Heart left ventricle (tissue), 16 donors: ENCODE measurements at regions of chr10 and their contacts with region 1.

Region 1: DNA sequence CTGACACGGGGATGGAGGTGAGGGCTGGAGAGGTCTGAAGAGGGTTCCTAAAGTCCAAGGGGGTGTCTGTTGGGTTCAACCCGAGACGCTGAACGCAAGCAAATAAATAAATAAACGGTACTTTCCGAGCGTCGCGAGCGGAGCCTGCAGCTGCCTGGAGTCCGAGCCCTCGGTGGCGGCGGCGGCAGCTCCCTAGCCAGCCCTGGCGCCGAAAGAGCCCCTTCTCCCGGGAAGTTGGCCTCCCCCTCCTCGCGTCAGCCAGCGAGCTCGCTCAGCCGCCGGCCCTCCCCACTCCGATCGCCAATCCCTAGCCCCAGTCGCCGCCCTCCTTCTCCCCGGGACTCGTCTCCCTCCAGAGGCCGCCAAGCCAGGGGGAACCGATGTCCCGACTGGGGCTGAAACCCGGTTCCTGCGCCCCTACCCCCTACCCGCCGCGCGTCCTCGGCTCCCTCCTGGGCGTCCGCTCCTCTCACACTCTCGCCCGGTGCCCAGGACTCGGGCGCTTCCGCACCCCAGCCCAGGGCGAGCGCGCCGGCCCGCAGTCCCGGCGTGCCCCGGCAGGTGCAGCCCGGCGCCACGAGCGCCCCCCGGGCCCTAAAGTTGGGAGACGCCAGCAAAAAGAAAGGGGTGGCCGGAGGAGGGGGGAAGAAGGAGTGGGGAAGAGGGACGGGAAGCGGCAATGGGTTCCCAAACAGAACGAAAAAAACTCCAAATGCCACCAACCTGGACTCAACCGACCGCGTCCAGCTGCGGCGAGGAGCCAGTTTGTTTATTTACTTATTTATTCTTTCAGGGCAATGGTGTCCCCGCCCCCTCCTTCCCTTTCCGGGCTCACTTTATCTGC is at the start of gene GFRA1:
- DNase-seq: peak in 2 of 5 donors; percentile 21 to 65
- ATAC-seq: peak in 1 of 4 donors; percentile 43
- H3K4me3 ChIP-seq: peak within 1 kb of the TSS; percentile 32 to 63 (median 51)
- H3K27ac ChIP-seq: peak within 1 kb of the TSS in 3 of 12 donors; percentile 23 to 76 (median 28)
- H3K4me1 ChIP-seq: peaks cover 0 to 41% (median 11%) of the 10 kb centered on the region in 12 donors
- H3K27me3 ChIP-seq: peaks cover 13 to 81% (median 48%) of the 10 kb centered on the region in 9 donors
- CTCF ChIP-seq: no peak
- POLR2A ChIP-seq: no peak
- total RNA-seq, gene GFRA1: 0.93 to 18.6 (median 1.5) TPM

Region 2: DNA sequence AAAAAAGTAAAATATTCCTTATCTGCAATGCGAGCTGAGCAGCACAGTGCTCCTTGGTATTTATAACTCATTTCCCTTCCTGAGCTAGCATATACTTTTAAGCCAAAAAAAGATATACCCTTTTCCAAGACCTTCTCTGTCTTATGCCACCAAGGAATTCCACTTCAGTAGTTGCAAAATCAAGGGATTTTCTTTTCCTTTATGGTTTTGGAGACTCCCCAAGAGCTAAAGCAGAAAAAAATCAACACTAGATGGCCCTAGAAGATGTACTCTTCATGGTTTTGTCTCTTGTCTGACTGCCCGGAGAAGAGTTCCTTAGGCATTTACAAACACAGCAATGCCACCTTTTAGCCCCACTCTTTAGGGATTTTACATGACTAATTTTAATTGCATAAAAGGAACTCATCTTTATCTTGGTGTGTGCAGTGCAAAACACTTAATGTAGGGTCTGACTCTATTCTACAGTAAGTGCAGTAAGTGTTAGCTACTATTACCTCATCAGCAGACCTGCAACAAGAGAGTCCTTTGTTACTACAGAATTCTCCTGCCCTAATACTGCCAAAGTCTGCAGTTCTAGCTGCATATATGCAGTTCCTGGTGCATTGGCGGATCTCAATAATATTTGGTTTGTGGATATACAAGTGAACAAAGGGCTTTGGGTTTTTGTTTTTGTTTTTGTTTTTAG is 443.0 kb before region 1 on chr10:
- intact Hi-C with region 1: loop called in 1 of 10 experiments (anchors 5 kb)
- DNase-seq: no peak
- ATAC-seq: peak in 2 of 4 donors; percentile 27 to 50
- H3K4me3 ChIP-seq: no peak overlapping the region
- H3K27ac ChIP-seq: no peak overlapping the region
- H3K4me1 ChIP-seq: peaks cover 0 to 22% (median 0%) of the 10 kb centered on the region in 12 donors
- H3K27me3 ChIP-seq: no peaks in the 10 kb centered on the region
- CTCF ChIP-seq: peak in 9 of 12 donors; percentile 15 to 46 (median 32)
- POLR2A ChIP-seq: no peak

Region 3: DNA sequence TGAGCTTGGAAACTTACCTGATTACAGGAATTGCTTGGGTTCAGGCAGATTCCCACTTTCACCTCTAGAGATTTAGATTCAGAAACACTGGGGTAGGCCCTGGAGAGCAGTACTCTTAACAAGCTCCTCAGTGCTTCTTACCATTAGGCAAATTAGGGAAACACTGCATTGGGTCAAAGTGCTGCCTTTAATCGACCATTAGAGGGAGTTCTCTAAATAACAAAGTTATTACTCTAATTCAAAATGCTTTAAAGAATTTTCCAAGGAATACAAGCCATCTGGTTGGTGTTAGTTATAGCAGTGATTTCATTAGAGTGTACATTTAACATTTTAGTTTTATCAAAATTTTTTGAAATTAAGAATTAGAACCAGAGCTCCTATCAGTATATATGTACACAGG is 324.2 kb before region 1 on chr10:
- intact Hi-C with region 1: loop called in 1 of 10 experiments (anchors 10 kb)
- DNase-seq: no peak
- ATAC-seq: peak in 1 of 4 donors; percentile 9
- H3K4me3 ChIP-seq: no peak overlapping the region
- H3K27ac ChIP-seq: no peak overlapping the region
- H3K4me1 ChIP-seq: peaks cover 0 to 13% (median 0%) of the 10 kb centered on the region in 12 donors
- H3K27me3 ChIP-seq: no peaks in the 10 kb centered on the region
- CTCF ChIP-seq: peak in 11 of 12 donors; percentile 11 to 58 (median 38)
- POLR2A ChIP-seq: no peak

Region 4: GRCh38 chr10:116044801-116045248 is 227.8 kb before region 1 on chr10:
- intact Hi-C with region 1: loop called in 1 of 10 experiments (anchors 10 kb)
- DNase-seq: peak in 4 of 5 donors; percentile 58 to 76 (median 70)
- ATAC-seq: peak; percentile 89 to 93 (median 90)
- H3K4me3 ChIP-seq: no peak overlapping the region
- H3K27ac ChIP-seq: peak overlapping the region in 2 of 12 donors; percentile 17 to 18
- H3K4me1 ChIP-seq: peaks cover 0 to 21% (median 14%) of the 10 kb centered on the region in 12 donors
- H3K27me3 ChIP-seq: no peaks in the 10 kb centered on the region
- CTCF ChIP-seq: no peak
- POLR2A ChIP-seq: no peak

Region 5: GRCh38 chr10:116232613-116233012 is 40.0 kb before region 1 on chr10:
- intact Hi-C with region 1: no loop called
- DNase-seq: no peak
- ATAC-seq: no peak
- H3K4me3 ChIP-seq: no peak overlapping the region
- H3K27ac ChIP-seq: no peak overlapping the region
- H3K4me1 ChIP-seq: no peaks in the 10 kb centered on the region
- H3K27me3 ChIP-seq: no peaks in the 10 kb centered on the region
- CTCF ChIP-seq: no peak
- POLR2A ChIP-seq: no peak

Region 6: GRCh38 chr10:116382290-116382689 is 109.6 kb after region 1 on chr10:
- intact Hi-C with region 1: no loop called
- DNase-seq: no peak
- ATAC-seq: no peak
- H3K4me3 ChIP-seq: no peak overlapping the region
- H3K27ac ChIP-seq: no peak overlapping the region
- H3K4me1 ChIP-seq: no peaks in the 10 kb centered on the region
- H3K27me3 ChIP-seq: no peaks in the 10 kb centered on the region
- CTCF ChIP-seq: no peak
- POLR2A ChIP-seq: no peak